Transverse colon (tissue), 4 donors: ENCODE measurements at regions of chr5 and their contacts with region 1.

Region 1: GRCh38 chr5:150034662-150035061 is 34.1 kb downstream of the HMGXB3 start:
- DNase-seq: no peak
- H3K4me3 ChIP-seq: no peak overlapping the region
- H3K27ac ChIP-seq: no peak overlapping the region
- H3K4me1 ChIP-seq: no peaks in the 10 kb centered on the region
- H3K27me3 ChIP-seq: no peaks in the 10 kb centered on the region
- CTCF ChIP-seq: no peak
- EP300 ChIP-seq: no peak
- POLR2A ChIP-seq: no peak

Region 2: GRCh38 chr5:149521738-149522685 is 512.6 kb before region 1 on chr5:
- in situ Hi-C with region 1: no loop called
- intact Hi-C with region 1: loop called (anchors 5 kb)
- DNase-seq: no peak
- H3K4me3 ChIP-seq: no peak overlapping the region
- H3K27ac ChIP-seq: peak overlapping the region in 1 of 4 donors; percentile 15
- H3K4me1 ChIP-seq: peaks cover 22 to 93% (median 48%) of the 10 kb centered on the region in 4 donors
- H3K27me3 ChIP-seq: no peaks in the 10 kb centered on the region
- CTCF ChIP-seq: no peak
- EP300 ChIP-seq: no peak
- POLR2A ChIP-seq: no peak